ENCODE measurements at regions of chr10 and their contacts with region 1.

Region 1: DNA sequence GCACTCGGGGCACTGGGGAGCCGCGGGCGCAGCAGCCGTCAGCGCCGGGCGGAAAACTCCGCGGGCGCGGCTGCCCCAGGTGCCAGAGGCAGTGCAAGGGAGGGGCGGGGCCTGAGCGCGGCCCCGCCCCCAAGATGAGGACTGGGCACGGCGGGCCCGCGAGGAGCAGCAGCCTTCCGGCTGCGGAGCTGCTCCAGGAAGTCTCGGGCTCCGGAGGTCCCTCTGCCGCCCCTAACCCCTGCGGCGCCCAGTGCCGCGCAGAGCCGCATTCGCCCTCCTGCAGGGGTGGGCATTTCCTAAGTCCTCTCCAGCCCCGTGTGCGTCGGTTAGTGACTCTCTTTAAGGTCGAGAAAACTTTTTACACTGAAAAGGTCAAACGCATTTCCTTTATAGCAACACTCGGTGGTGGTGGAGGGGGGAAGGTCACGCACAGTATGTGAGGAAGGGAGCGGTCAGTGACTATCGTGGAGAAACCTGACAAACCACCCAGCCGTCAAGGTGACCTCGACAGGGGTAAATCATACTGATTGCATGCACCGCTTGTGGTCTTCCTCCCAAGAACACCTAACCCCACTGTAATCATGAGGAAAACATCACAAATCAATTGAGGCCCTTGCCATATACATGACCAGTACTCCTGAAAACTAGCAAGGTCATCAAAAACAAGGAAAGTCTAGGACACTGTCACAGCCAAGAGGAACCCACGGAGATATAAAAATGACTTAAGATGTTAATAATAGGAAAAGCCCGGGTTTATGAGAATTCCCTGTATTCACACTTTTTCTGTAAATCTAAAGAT is at the start of gene ANXA11:
- DNase-seq: peak; percentile 72 to 94 (median 88)
- ATAC-seq: peak; percentile 79
- H3K4me3 ChIP-seq: peak within 1 kb of the TSS; percentile 86
- H3K4me3 Mint-ChIP-seq: peak within 1 kb of the TSS; percentile 90
- H3K27ac ChIP-seq: peak within 1 kb of the TSS; percentile 72 to 86
- H3K27ac Mint-ChIP-seq: peak within 1 kb of the TSS; percentile 96
- H3K4me1 ChIP-seq: peaks cover 53% of the 10 kb centered on the region
- H3K4me1 Mint-ChIP-seq: peaks cover 56% of the 10 kb centered on the region
- H3K27me3 ChIP-seq: no peaks in the 10 kb centered on the region
- H3K27me3 Mint-ChIP-seq: no peaks in the 10 kb centered on the region
- CTCF ChIP-seq: no peak
- total RNA-seq, gene ANXA11: 153 to 159 TPM

Region 2: DNA sequence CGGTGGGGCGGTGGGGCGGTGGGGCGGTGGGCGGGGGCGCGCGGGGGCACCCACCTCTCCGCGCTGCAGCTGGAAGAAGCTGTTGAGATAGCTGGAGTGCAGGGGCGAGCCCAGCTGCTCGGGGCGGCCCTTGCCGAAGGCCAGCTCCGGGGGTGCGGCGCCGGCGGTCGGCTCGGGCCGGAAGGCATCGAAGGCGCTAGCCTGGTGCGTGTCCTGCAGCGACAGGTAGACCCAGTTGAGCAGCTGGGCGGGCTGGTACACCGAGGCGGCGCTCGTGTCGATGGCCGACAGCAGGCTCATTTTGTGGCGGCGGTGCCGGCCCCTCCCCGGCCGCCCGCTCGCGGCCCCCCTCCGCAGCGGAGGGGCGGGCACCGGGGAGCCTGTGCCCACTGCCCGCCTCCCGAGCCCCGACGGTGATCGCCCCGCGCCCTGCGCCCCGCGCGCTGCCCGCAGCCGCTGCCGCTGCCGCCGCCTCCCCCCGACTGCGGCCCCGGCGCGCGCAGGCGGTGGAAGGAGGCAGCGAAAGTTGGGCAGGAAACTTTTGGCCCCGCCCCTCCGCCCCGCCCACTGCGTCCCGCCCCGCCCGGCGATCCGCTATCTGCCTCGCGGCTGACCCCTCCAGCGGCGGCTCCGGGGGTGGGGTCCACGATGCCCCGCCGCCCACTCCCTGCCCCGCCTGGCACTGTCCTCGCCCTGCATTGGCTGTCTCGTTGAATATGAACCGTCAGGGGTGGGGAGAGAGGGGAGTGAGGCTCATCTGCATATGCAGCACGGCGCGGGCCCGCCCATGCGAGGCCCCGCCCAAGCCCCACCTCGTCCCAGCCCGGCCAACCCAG is 760.3 kb before region 1 on chr10 and contains the start of gene ZCCHC24:
- CTCF ChIA-PET with region 1: no interaction called
- POLR2A ChIA-PET with region 1: no interaction called
- intact Hi-C with region 1: loop called in 1 of 2 experiments (anchors 10 kb)
- DNase-seq: peak; percentile 87 to 98 (median 93)
- ATAC-seq: peak; percentile 91
- H3K4me3 ChIP-seq: peak within 1 kb of the TSS; percentile 58
- H3K4me3 Mint-ChIP-seq: peak within 1 kb of the TSS; percentile 94
- H3K27ac ChIP-seq: no peak within 1 kb of the TSS
- H3K27ac Mint-ChIP-seq: peak within 1 kb of the TSS; percentile 83
- H3K4me1 ChIP-seq: peaks cover 33% of the 10 kb centered on the region
- H3K4me1 Mint-ChIP-seq: peaks cover 32% of the 10 kb centered on the region
- H3K27me3 ChIP-seq: no peaks in the 10 kb centered on the region
- H3K27me3 Mint-ChIP-seq: no peaks in the 10 kb centered on the region
- CTCF ChIP-seq: no peak
- total RNA-seq, gene ZCCHC24: 0.67 to 0.85 TPM

Region 3: GRCh38 chr10:80078448-80079311 is 127.0 kb before region 1 on chr10 and contains the start of gene TMEM254:
- CTCF ChIA-PET with region 1: no interaction called
- POLR2A ChIA-PET with region 1: interaction called, 5 read pairs
- intact Hi-C with region 1: loop called (anchors 2 to 5 kb)
- DNase-seq: peak; percentile 77 to 94 (median 88)
- ATAC-seq: peak; percentile 76
- H3K4me3 ChIP-seq: peak within 1 kb of the TSS; percentile 99
- H3K4me3 Mint-ChIP-seq: peak within 1 kb of the TSS; percentile 85
- H3K27ac ChIP-seq: peak within 1 kb of the TSS; percentile 86 to 90
- H3K27ac Mint-ChIP-seq: peak within 1 kb of the TSS; percentile 74
- H3K4me1 ChIP-seq: peaks cover 17% of the 10 kb centered on the region
- H3K4me1 Mint-ChIP-seq: peaks cover 30% of the 10 kb centered on the region
- H3K27me3 ChIP-seq: no peaks in the 10 kb centered on the region
- H3K27me3 Mint-ChIP-seq: no peaks in the 10 kb centered on the region
- CTCF ChIP-seq: no peak
- total RNA-seq, gene TMEM254: 4.0 to 5.6 TPM

Region 4: DNA sequence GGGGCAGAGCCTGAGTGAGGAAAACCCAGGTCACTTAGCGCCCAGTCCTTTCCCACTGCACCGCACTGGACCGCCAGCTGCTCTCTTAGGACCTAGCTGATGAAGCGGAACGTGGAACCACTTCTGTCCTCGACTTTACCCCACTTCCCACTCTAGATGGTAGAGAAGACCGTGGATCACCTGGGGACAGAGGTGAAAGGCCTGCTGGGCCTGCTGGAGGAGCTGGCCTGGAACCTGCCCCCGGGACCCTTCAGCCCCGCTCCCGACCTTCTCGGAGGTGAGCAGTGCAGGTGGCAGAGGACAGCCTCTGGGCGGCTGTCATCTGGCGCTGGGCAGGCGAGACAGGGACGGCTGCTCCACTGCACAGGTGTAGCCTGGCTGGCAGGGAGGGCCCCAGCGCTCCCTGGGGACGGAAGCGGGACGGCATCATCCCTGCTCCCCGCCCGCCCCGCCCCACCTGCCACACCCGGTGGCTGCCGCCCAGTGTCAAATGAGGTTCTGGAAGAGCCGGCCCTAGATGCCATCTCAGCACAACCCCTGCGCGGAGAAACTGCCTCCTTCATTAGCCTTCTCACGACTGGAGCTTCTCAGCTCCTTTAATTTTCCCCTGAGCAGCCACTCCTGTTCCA is 61.5 kb before region 1 on chr10:
- CTCF ChIA-PET with region 1: interaction called, 14 read pairs
- POLR2A ChIA-PET with region 1: interaction called, 22 read pairs
- intact Hi-C with region 1: loop called (anchors 5 kb)
- DNase-seq: peak in 10 of 14 experiments; percentile 11 to 54 (median 30)
- ATAC-seq: peak; percentile 43
- H3K4me3 ChIP-seq: peak overlapping the region; percentile 56
- H3K4me3 Mint-ChIP-seq: peak overlapping the region; percentile 85
- H3K27ac ChIP-seq: no peak overlapping the region
- H3K27ac Mint-ChIP-seq: peak overlapping the region; percentile 89
- H3K4me1 ChIP-seq: peaks cover 17% of the 10 kb centered on the region
- H3K4me1 Mint-ChIP-seq: peaks cover 27% of the 10 kb centered on the region
- H3K27me3 ChIP-seq: no peaks in the 10 kb centered on the region
- H3K27me3 Mint-ChIP-seq: peaks cover 12% of the 10 kb centered on the region
- CTCF ChIP-seq: peak; percentile 31

Region 5: DNA sequence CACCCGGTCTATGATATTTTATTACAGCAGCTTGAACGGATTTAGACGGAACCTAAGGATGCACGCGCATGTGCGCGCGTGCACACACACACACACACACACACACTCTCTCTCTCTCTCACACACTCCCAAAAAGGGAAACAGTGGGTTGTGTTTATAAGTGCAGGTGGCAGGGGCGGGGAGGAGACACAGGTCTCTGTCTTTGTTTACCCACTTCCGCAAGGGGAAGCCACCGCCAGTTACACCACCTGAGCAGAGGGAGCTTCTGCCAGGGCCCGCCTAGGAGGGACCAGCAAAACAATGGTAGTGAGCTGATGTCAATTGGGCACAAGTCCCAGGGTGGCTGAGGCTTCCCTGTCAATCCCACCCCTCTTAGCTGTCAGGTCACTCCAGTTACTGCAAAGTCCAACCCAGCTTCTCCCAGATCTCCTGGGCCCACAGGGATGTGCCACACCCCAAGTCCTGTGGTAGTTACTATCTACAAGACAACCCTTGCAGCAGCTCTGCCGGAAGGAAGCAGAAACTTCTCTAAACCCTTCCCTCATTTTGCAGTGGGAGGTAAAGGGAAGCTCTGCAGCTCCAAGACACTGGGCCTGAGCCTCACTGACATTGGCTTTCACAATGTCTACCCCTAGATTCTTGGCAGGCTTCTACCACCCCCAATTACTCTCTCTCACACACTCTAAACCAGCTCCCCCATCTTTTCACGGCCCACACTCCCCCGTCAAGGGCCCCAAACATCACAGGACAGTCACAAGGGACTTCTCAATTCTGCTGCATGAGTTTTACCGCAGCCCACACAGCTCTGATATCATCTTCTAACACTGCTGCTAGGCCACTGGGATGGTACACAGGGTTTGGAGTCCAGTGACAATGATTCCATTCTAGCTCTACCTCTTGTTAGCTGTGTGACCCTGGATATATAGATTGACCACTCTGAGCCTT is 17.9 kb before region 1 on chr10:
- CTCF ChIA-PET with region 1: interaction called, 15 read pairs
- POLR2A ChIA-PET with region 1: interaction called, 218 read pairs
- intact Hi-C with region 1: loop called (anchors 1 kb)
- DNase-seq: peak; percentile 72 to 96 (median 83)
- ATAC-seq: peak; percentile 93
- H3K4me3 ChIP-seq: peak overlapping the region; percentile 42
- H3K4me3 Mint-ChIP-seq: peak overlapping the region; percentile 80
- H3K27ac ChIP-seq: peak overlapping the region; percentile 76 to 84
- H3K27ac Mint-ChIP-seq: peak overlapping the region; percentile 91
- H3K4me1 ChIP-seq: peaks cover 85% of the 10 kb centered on the region
- H3K4me1 Mint-ChIP-seq: peaks cover 90% of the 10 kb centered on the region
- H3K27me3 ChIP-seq: no peaks in the 10 kb centered on the region
- H3K27me3 Mint-ChIP-seq: no peaks in the 10 kb centered on the region
- CTCF ChIP-seq: no peak

Region 6: DNA sequence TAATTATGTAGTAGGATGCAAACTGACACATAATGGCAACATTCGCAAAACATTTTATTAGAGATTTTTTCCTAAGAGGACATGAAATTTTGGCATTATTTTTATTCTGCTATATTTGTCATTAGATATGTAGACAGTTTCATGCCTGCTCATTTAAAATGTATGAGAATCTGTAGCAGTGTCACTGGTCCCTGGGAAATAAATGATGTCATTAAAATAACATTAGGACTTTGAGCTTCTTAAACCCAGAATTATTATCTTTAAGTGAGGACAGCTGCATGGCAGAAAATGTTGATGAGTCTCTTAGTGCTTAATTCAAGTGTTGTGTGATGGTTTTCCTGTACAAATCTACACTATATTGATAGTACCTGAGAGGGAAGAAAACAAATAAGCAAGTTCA is 1837.2 kb after region 1 on chr10:
- CTCF ChIA-PET with region 1: no interaction called
- POLR2A ChIA-PET with region 1: no interaction called
- intact Hi-C with region 1: no loop called
- DNase-seq: no peak
- ATAC-seq: no peak
- H3K4me3 ChIP-seq: no peak overlapping the region
- H3K4me3 Mint-ChIP-seq: no peak overlapping the region
- H3K27ac ChIP-seq: no peak overlapping the region
- H3K27ac Mint-ChIP-seq: no peak overlapping the region
- H3K4me1 ChIP-seq: no peaks in the 10 kb centered on the region
- H3K4me1 Mint-ChIP-seq: no peaks in the 10 kb centered on the region
- H3K27me3 ChIP-seq: no peaks in the 10 kb centered on the region
- H3K27me3 Mint-ChIP-seq: no peaks in the 10 kb centered on the region
- CTCF ChIP-seq: no peak